Activated T-helper 1 cell treated with anti-CD3 and anti-CD28 coated beads, Interleukin-12 subunit alpha, Interleukin-12 subunit beta, Interleukin-2, Interleukin-4 antibody, amounts not matched to agents 30 ng/mL and 10 ng/mL and 1 ng/mL, durations not matched to agents 14 hours and 24 hours and 36 hours (primary cell): ENCODE measurements at regions of chr11 and their contacts with region 1.

Region 1: GRCh38 chr11:94128746-94129511 is at the start of gene PANX1:
- DNase-seq: peak; percentile 73
- H3K4me3 Mint-ChIP-seq: no peak within 1 kb of the TSS
- H3K27ac Mint-ChIP-seq: peak within 1 kb of the TSS; percentile 88
- H3K4me1 Mint-ChIP-seq: peaks cover 20% of the 10 kb centered on the region
- H3K27me3 Mint-ChIP-seq: no peaks in the 10 kb centered on the region
- total RNA-seq, gene PANX1: 20.8 and 21.9 TPM in 2 replicates

Region 2: DNA sequence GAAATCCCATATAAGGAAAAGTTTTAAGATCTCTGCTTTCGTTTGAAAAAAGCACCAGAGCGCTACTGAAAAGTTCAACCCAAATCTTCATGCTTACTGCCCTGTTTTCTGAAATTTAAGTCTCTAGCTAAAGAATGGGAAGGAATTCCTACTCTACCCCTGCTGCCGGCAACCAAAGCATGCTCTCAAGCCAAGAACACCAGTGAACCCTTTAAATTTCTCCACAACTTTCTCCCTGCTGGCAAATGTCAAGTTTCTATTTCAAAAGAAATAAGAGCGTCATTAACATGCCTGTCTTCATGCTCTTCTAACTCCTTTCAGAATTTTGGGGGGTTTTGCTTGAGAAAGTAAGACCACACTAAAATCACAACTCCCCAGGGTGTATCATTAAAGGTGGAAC is 579.0 kb before region 1 on chr11:
- intact Hi-C with region 1: no loop called
- DNase-seq: no peak
- H3K4me3 Mint-ChIP-seq: no peak overlapping the region
- H3K27ac Mint-ChIP-seq: no peak overlapping the region
- H3K4me1 Mint-ChIP-seq: peaks cover 4% of the 10 kb centered on the region
- H3K27me3 Mint-ChIP-seq: peaks cover 12% of the 10 kb centered on the region

Region 3: GRCh38 chr11:93662177-93662575 is 466.8 kb before region 1 on chr11:
- intact Hi-C with region 1: loop called (anchors 5 kb)
- DNase-seq: no peak
- H3K4me3 Mint-ChIP-seq: peak overlapping the region; percentile 89
- H3K27ac Mint-ChIP-seq: peak overlapping the region; percentile 86
- H3K4me1 Mint-ChIP-seq: peaks cover 47% of the 10 kb centered on the region
- H3K27me3 Mint-ChIP-seq: no peaks in the 10 kb centered on the region

Region 4: GRCh38 chr11:93784152-93784934 is 344.6 kb before region 1 on chr11 and contains the start of gene MED17:
- intact Hi-C with region 1: loop called (anchors 2 kb)
- DNase-seq: peak; percentile 87
- H3K4me3 Mint-ChIP-seq: peak within 1 kb of the TSS; percentile 93
- H3K27ac Mint-ChIP-seq: peak within 1 kb of the TSS; percentile 88
- H3K4me1 Mint-ChIP-seq: peaks cover 45% of the 10 kb centered on the region
- H3K27me3 Mint-ChIP-seq: no peaks in the 10 kb centered on the region
- total RNA-seq, gene MED17: 55.8 and 59.4 TPM in 2 replicates

Region 5: DNA sequence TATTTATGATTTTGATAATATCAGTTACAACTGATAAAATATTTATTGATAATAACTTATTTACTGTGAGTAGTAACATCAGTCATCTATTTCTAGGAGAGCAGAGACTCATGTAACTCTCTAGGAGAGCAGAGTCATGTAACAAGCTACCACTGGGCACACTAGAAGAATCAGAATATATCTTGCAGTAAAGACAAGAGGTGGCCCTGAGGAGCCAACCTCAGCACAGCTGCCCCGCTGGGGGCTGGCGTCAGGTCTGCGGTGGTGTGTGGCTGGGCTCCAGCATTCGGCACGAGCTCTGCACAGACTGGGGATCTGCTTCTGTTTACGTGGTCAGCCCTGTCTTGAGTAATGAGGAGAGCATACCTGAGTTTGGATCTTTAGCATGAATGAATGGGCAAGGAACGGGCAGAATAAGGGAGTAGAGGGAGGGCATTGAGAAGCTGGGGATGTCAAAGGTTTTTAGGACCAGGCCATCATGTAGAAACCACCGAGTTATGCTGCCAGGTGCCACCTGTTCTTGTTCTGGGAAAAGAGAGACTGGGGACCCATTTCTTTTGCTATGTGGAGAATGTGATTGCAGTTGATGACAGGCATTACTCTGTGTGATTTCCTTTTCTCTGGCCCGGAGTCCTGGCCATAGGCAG is 158.9 kb before region 1 on chr11:
- intact Hi-C with region 1: no loop called
- DNase-seq: no peak
- H3K4me3 Mint-ChIP-seq: no peak overlapping the region
- H3K27ac Mint-ChIP-seq: no peak overlapping the region
- H3K4me1 Mint-ChIP-seq: no peaks in the 10 kb centered on the region
- H3K27me3 Mint-ChIP-seq: peaks cover 2% of the 10 kb centered on the region

Region 6: GRCh38 chr11:93986716-93987115 is 142.2 kb before region 1 on chr11:
- intact Hi-C with region 1: no loop called
- DNase-seq: no peak
- H3K4me3 Mint-ChIP-seq: no peak overlapping the region
- H3K27ac Mint-ChIP-seq: no peak overlapping the region
- H3K4me1 Mint-ChIP-seq: no peaks in the 10 kb centered on the region
- H3K27me3 Mint-ChIP-seq: peaks cover 2% of the 10 kb centered on the region

Region 7: GRCh38 chr11:94084164-94084563 is 44.8 kb before region 1 on chr11:
- intact Hi-C with region 1: no loop called
- DNase-seq: no peak
- H3K4me3 Mint-ChIP-seq: no peak overlapping the region
- H3K27ac Mint-ChIP-seq: no peak overlapping the region
- H3K4me1 Mint-ChIP-seq: no peaks in the 10 kb centered on the region
- H3K27me3 Mint-ChIP-seq: peaks cover 5% of the 10 kb centered on the region

Region 8: DNA sequence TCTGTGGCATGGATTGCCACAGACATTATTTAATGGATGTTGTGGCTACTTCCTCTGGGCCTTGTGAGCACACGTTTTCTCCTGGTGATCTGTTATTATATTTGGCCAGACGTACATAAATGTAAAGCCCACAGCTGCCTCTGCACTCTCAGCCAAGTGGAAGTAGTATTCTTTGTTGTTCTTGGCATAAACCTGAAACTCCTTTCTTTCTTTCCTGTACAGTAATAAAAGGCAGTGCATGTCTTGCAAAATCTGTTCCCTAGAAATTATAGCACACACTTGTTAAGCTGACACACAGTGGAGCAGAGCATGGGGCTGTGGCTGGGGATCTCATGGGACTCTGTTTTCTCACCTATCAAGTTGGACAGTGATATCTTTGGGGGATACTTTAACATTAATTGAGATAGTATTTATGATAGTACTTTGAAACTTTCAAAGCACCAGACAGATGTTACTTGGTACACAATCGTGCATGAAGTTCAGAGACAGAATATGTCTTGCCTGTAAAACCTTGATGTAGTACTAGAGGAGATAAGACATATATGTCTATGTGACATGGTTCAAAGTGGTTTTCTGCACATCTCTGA is 20.6 kb after region 1 on chr11:
- intact Hi-C with region 1: loop called (anchors 1 kb)
- DNase-seq: no peak
- H3K4me3 Mint-ChIP-seq: no peak overlapping the region
- H3K27ac Mint-ChIP-seq: no peak overlapping the region
- H3K4me1 Mint-ChIP-seq: peaks cover 88% of the 10 kb centered on the region
- H3K27me3 Mint-ChIP-seq: no peaks in the 10 kb centered on the region

Region 9: DNA sequence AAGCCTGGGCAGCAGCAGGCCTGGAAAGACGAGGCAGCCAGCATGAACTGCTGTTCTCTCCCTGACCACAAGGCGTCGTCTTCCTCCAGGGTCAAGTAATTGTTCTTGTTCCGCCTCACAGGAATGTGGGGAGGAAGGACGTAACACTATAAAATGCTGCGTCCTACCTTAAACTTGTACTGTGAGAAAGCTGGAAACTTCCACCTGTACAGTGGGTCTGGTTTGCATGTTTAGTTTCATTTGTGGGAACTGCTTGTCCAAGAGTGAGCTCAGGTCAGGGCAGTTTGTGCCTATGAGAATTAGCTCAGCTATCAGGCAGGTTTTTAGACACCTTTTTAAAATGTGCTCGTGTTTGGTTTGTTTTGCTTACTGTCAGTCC is 54.9 kb after region 1 on chr11:
- intact Hi-C with region 1: loop called (anchors 5 kb)
- DNase-seq: no peak
- H3K4me3 Mint-ChIP-seq: no peak overlapping the region
- H3K27ac Mint-ChIP-seq: no peak overlapping the region
- H3K4me1 Mint-ChIP-seq: no peaks in the 10 kb centered on the region
- H3K27me3 Mint-ChIP-seq: no peaks in the 10 kb centered on the region